SK-N-SH (cell line): ENCODE measurements at regions of chr1 and their contacts with region 1.

Region 1: DNA sequence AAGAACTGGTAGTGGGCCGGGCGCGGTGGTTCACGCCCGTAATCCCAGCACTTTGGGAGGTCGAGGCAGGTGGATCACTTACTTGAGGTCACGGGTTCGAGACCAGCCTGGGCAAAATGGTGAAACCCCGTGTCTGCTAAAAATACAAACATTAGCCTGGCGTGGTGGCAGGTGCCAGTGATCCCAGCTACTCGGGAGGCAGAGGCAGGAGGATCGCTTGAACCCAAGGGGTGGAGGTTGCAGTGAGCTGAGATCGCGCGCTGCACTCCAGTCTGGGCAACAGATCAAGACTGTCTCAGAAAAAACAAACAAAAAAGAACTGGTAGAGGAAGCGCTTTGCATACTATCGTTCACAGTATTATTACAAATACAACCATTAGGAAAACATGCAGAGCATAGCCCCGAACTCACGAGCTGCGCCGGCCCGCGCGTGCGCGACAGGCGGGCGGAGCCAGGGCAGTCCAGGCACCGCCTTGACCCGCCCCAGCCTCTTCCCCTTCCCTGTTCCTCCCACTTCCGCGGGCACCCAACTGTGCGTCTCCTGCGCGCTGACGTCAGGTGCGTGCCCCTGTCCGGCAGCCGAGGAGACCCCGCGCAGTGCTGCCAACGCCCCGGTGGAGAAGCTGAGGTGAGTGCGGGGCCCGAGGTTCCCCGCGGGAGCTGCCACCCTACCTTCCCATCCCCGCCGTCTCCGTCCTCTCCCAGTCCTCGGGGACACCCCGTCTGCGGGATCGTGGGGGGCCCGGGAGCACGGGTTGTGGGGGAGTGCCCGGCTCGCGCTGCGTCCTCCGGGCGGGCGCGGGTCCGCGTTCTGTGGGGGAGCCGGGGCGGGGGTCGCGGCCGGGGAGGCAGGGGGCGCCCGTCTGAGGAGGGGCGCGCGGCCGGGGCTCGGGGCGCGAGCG is at the start of gene CDC42:
- DNase-seq: peak; percentile 98
- H3K4me3 ChIP-seq: peak within 1 kb of the TSS; percentile 70 to 86
- H3K27ac ChIP-seq: peak within 1 kb of the TSS; percentile 88 to 92
- H3K4me1 ChIP-seq: peaks cover 0 to 5% of the 10 kb centered on the region in 2 experiments; a peak in 3 of 4 replicates
- H3K27me3 ChIP-seq: no peaks in the 10 kb centered on the region
- CTCF ChIP-seq: no peak
- EP300 ChIP-seq: 0 out of 4 replicates have a peak, but pooled peaks of 1 of the 2 experiments have one; percentile 9
- RAD21 ChIP-seq: no peak
- polyA plus RNA-seq, gene CDC42: 113 and 148 TPM in 2 replicates

Region 2: GRCh38 chr1:22025368-22026155 is 26.8 kb before region 1 on chr1:
- CTCF ChIA-PET with region 1: interaction called, 7 read pairs
- POLR2A ChIA-PET with region 1: interaction called, 29 read pairs
- DNase-seq: peak; percentile 89
- H3K4me3 ChIP-seq: peak overlapping the region; percentile 77 to 97
- H3K27ac ChIP-seq: peak overlapping the region; percentile 93 to 99
- H3K4me1 ChIP-seq: peaks cover 0 to 9% of the 10 kb centered on the region in 2 experiments; a peak in 1 of 4 replicates
- H3K27me3 ChIP-seq: no peaks in the 10 kb centered on the region
- CTCF ChIP-seq: no peak
- EP300 ChIP-seq: 0 out of 4 replicates have a peak, but pooled peaks of 1 of the 2 experiments have one; percentile 6
- RAD21 ChIP-seq: no peak

Region 3: DNA sequence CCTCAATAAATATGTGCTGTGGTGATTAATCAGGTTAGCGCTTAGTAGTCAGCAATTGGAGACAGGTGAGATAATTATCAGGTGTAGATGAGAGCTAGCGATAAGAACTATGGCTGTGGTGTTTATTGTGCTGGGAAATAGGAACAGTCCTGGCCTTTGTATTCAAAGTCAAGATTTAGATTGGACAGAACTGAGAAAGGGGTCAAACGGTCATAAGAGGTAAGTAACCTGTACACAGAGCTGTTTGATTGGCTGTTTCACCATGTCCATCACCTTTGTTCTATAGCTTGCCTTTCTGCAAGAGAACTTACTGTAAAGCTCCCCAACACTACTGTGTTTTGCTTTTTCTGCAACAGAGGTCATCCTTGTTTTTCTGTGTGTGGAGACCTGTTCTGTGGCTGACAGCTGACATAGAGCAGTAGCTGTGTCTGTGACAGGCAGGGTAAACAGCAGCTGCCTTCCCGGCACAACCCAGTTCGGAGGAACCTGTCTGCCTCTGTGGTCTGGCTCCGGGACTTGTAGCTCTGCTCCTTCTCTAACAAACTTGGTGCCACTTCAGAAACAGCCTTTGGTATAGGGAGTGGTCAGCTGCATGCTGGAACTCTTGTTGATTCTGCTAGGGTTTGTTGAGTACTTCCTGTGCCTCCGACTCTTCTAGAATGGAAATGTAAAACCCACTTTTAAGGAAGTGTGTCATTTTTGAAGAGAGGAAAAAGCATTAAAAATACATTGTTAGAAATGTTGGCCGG is 21.0 kb before region 1 on chr1:
- CTCF ChIA-PET with region 1: interaction called, 3 read pairs
- POLR2A ChIA-PET with region 1: interaction called, 12 read pairs
- DNase-seq: peak; percentile 43
- H3K4me3 ChIP-seq: no peak overlapping the region
- H3K27ac ChIP-seq: peak overlapping the region in 1 of 2 experiments; percentile 47; a peak in 1 of 4 replicates
- H3K4me1 ChIP-seq: peaks cover 0 to 8% of the 10 kb centered on the region in 2 experiments; a peak in 1 of 4 replicates
- H3K27me3 ChIP-seq: no peaks in the 10 kb centered on the region
- CTCF ChIP-seq: no peak
- EP300 ChIP-seq: peak in 1 of 2 experiments; percentile 41; a peak in 1 of 4 replicates
- RAD21 ChIP-seq: peak; percentile 27; the same call in 1 of the 2 replicates